CD8-positive, alpha-beta T cell (primary cell): ENCODE measurements at regions of chr12 and their contacts with region 1.

Region 1: DNA sequence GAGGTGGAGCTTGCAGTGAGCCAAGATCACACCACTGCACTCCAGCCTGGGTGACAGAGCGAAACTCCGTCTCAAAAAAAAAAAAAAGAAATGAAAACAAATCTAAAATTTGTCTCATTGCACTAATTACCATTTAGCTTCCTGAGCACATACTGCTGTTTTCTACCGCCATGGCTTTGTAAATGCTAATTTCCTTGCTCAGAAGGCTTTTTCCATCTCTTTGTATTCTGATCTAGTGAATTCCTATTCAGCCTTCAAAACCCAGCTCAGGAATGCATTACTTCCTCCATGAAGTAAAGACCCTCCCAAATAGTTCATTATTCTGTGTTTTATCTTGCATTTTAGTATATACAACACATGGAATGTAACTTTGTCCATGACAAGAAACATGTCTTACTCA is 33.6 kb downstream of the CEP83 start:
- DNase-seq: no peak
- ATAC-seq: no peak
- H3K4me3 ChIP-seq: no peak overlapping the region
- H3K4me3 Mint-ChIP-seq: no peak overlapping the region
- H3K27ac ChIP-seq: no peak overlapping the region
- H3K27ac Mint-ChIP-seq: no peak overlapping the region
- H3K4me1 ChIP-seq: no peaks in the 10 kb centered on the region
- H3K4me1 Mint-ChIP-seq: peaks cover 5% of the 10 kb centered on the region
- H3K27me3 ChIP-seq: no peaks in the 10 kb centered on the region
- H3K27me3 Mint-ChIP-seq: no peaks in the 10 kb centered on the region
- CTCF ChIP-seq: no peak

Region 2: GRCh38 chr12:94401326-94401725 is 24.7 kb before region 1 on chr12:
- CTCF ChIA-PET with region 1: no interaction called
- POLR2A ChIA-PET with region 1: no interaction called
- intact Hi-C with region 1: no loop called
- DNase-seq: no peak
- ATAC-seq: no peak
- H3K4me3 ChIP-seq: no peak overlapping the region
- H3K4me3 Mint-ChIP-seq: no peak overlapping the region
- H3K27ac ChIP-seq: no peak overlapping the region
- H3K27ac Mint-ChIP-seq: no peak overlapping the region
- H3K4me1 ChIP-seq: no peaks in the 10 kb centered on the region
- H3K4me1 Mint-ChIP-seq: peaks cover 9% of the 10 kb centered on the region
- H3K27me3 ChIP-seq: no peaks in the 10 kb centered on the region
- H3K27me3 Mint-ChIP-seq: no peaks in the 10 kb centered on the region
- CTCF ChIP-seq: no peak

Region 3: GRCh38 chr12:94415066-94415465 is 11.0 kb before region 1 on chr12:
- CTCF ChIA-PET with region 1: no interaction called
- POLR2A ChIA-PET with region 1: no interaction called
- intact Hi-C with region 1: no loop called
- DNase-seq: no peak
- ATAC-seq: no peak
- H3K4me3 ChIP-seq: no peak overlapping the region
- H3K4me3 Mint-ChIP-seq: no peak overlapping the region
- H3K27ac ChIP-seq: no peak overlapping the region
- H3K27ac Mint-ChIP-seq: no peak overlapping the region
- H3K4me1 ChIP-seq: no peaks in the 10 kb centered on the region
- H3K4me1 Mint-ChIP-seq: peaks cover 2% of the 10 kb centered on the region
- H3K27me3 ChIP-seq: no peaks in the 10 kb centered on the region
- H3K27me3 Mint-ChIP-seq: no peaks in the 10 kb centered on the region
- CTCF ChIP-seq: no peak

Region 4: GRCh38 chr12:94445662-94446061 is 19.6 kb after region 1 on chr12:
- CTCF ChIA-PET with region 1: no interaction called
- POLR2A ChIA-PET with region 1: no interaction called
- intact Hi-C with region 1: loop called in 1 of 2 experiments (anchors 1 kb)
- DNase-seq: no peak
- ATAC-seq: no peak
- H3K4me3 ChIP-seq: no peak overlapping the region
- H3K4me3 Mint-ChIP-seq: no peak overlapping the region
- H3K27ac ChIP-seq: no peak overlapping the region
- H3K27ac Mint-ChIP-seq: no peak overlapping the region
- H3K4me1 ChIP-seq: no peaks in the 10 kb centered on the region
- H3K4me1 Mint-ChIP-seq: peaks cover 13% of the 10 kb centered on the region
- H3K27me3 ChIP-seq: no peaks in the 10 kb centered on the region
- H3K27me3 Mint-ChIP-seq: no peaks in the 10 kb centered on the region
- CTCF ChIP-seq: no peak

Region 5: GRCh38 chr12:94516985-94517384 is 90.9 kb after region 1 on chr12:
- CTCF ChIA-PET with region 1: no interaction called
- POLR2A ChIA-PET with region 1: no interaction called
- intact Hi-C with region 1: no loop called
- DNase-seq: no peak
- ATAC-seq: no peak
- H3K4me3 ChIP-seq: no peak overlapping the region
- H3K4me3 Mint-ChIP-seq: no peak overlapping the region
- H3K27ac ChIP-seq: no peak overlapping the region
- H3K27ac Mint-ChIP-seq: no peak overlapping the region
- H3K4me1 ChIP-seq: no peaks in the 10 kb centered on the region
- H3K4me1 Mint-ChIP-seq: no peaks in the 10 kb centered on the region
- H3K27me3 ChIP-seq: no peaks in the 10 kb centered on the region
- H3K27me3 Mint-ChIP-seq: no peaks in the 10 kb centered on the region
- CTCF ChIP-seq: no peak